CD4-positive, alpha-beta memory T cell (primary cell): ENCODE measurements at regions of chr15 and their contacts with region 1.

Region 1: GRCh38 chr15:41972253-41973242 is at the start of gene EHD4:
- DNase-seq: peak; percentile 94 to 97 (median 95)
- H3K4me3 ChIP-seq: peak within 1 kb of the TSS; percentile 76 to 79
- H3K4me3 Mint-ChIP-seq: peak within 1 kb of the TSS; percentile 92 to 97 (median 94)
- H3K27ac ChIP-seq: peak within 1 kb of the TSS; percentile 87
- H3K27ac Mint-ChIP-seq: peak within 1 kb of the TSS; percentile 85 to 98 (median 97)
- H3K4me1 ChIP-seq: peaks cover 49% of the 10 kb centered on the region
- H3K4me1 Mint-ChIP-seq: peaks cover 31 to 53% (median 40%) of the 10 kb centered on the region in 4 donors
- H3K27me3 ChIP-seq: no peaks in the 10 kb centered on the region
- H3K27me3 Mint-ChIP-seq: peaks cover 5% of the 10 kb centered on the region in 2 donors
- total RNA-seq, gene EHD4: 15.2 to 15.6 TPM

Region 2: GRCh38 chr15:41416742-41417406 is 555.7 kb before region 1 on chr15 and contains the start of gene RTF1:
- CTCF ChIA-PET with region 1: no interaction called
- POLR2A ChIA-PET with region 1: no interaction called
- intact Hi-C with region 1: loop called (anchors 2 kb)
- DNase-seq: peak; percentile 93 to 98 (median 96)
- H3K4me3 ChIP-seq: peak within 1 kb of the TSS; percentile 91 to 100
- H3K4me3 Mint-ChIP-seq: peak within 1 kb of the TSS; percentile 91 to 96 (median 96)
- H3K27ac ChIP-seq: peak within 1 kb of the TSS; percentile 72
- H3K27ac Mint-ChIP-seq: peak within 1 kb of the TSS; percentile 86 to 98 (median 96)
- H3K4me1 ChIP-seq: peaks cover 34% of the 10 kb centered on the region
- H3K4me1 Mint-ChIP-seq: peaks cover 24 to 55% (median 38%) of the 10 kb centered on the region in 4 donors
- H3K27me3 ChIP-seq: no peaks in the 10 kb centered on the region
- H3K27me3 Mint-ChIP-seq: no peaks in the 10 kb centered on the region
- total RNA-seq, gene RTF1: 31.9 to 35.9 TPM

Region 3: GRCh38 chr15:41870689-41871081 is 101.9 kb before region 1 on chr15:
- CTCF ChIA-PET with region 1: no interaction called
- POLR2A ChIA-PET with region 1: no interaction called
- intact Hi-C with region 1: loop called (anchors 1 kb)
- DNase-seq: peak; percentile 67 to 79 (median 71)
- H3K4me3 ChIP-seq: no peak overlapping the region
- H3K4me3 Mint-ChIP-seq: peak overlapping the region in 7 of 8 donors; percentile 12 to 82 (median 64)
- H3K27ac ChIP-seq: no peak overlapping the region
- H3K27ac Mint-ChIP-seq: peak overlapping the region; percentile 13 to 98 (median 96)
- H3K4me1 ChIP-seq: peaks cover 11% of the 10 kb centered on the region
- H3K4me1 Mint-ChIP-seq: peaks cover 8 to 10% (median 9%) of the 10 kb centered on the region in 4 donors
- H3K27me3 ChIP-seq: no peaks in the 10 kb centered on the region
- H3K27me3 Mint-ChIP-seq: no peaks in the 10 kb centered on the region

Region 4: DNA sequence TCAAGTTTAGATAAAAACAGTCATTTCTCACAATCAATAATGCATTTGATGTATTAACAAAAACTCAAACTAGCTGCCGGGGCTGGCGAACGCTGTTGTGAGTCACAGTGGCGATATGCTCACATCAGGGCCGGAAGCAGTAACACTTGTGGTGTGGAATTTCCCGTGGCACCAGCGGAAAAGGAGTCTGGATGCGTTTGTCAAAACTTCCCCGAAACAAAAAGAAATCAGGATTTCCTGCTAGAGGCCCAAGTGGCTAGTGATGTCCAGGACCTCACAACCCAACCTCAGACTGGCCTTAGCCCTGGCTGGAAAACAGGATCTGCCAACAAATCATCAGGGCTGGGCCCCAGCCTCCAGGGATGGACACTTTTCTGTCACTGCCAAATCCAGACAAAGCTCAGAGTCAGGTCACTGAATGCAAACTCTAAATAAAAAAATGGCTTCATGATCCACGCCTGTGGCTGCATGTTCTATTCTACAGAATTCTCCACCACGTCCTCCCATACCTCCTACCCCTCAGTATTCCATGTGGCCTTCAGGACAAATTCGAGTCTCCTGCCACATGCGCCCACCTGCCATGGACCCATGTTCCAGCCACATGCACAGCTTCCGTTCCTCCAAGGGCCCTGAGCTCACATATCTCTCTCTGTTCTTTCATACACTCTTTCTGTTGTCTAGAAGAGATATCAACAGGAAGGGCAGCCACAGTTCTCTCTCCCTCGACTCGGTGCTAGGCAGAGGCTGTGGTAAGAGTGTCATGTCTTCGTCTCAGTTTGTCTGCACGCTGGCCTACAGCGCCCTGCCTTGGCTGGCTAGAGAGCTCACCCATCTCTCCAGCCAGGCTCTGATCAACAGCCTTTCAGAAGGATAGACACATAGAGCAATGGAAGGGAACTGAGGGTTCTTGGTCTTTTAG is 35.6 kb before region 1 on chr15:
- CTCF ChIA-PET with region 1: interaction called, 71 read pairs
- POLR2A ChIA-PET with region 1: interaction called, 245 read pairs
- intact Hi-C with region 1: loop called (anchors 1 kb)
- DNase-seq: peak; percentile 80 to 95 (median 81)
- H3K4me3 ChIP-seq: peak overlapping the region in 1 of 2 donors; percentile 12
- H3K4me3 Mint-ChIP-seq: peak overlapping the region; percentile 77 to 95 (median 89)
- H3K27ac ChIP-seq: peak overlapping the region; percentile 97
- H3K27ac Mint-ChIP-seq: peak overlapping the region; percentile 94 to 100 (median 100)
- H3K4me1 ChIP-seq: peaks cover 75% of the 10 kb centered on the region
- H3K4me1 Mint-ChIP-seq: peaks cover 46 to 76% (median 67%) of the 10 kb centered on the region in 4 donors
- H3K27me3 ChIP-seq: no peaks in the 10 kb centered on the region
- H3K27me3 Mint-ChIP-seq: no peaks in the 10 kb centered on the region

Region 5: GRCh38 chr15:42050484-42051255 is 78.1 kb after region 1 on chr15:
- CTCF ChIA-PET with region 1: no interaction called
- POLR2A ChIA-PET with region 1: no interaction called
- intact Hi-C with region 1: no loop called
- DNase-seq: no peak
- H3K4me3 ChIP-seq: no peak overlapping the region
- H3K4me3 Mint-ChIP-seq: no peak overlapping the region
- H3K27ac ChIP-seq: no peak overlapping the region
- H3K27ac Mint-ChIP-seq: no peak overlapping the region
- H3K4me1 ChIP-seq: no peaks in the 10 kb centered on the region
- H3K4me1 Mint-ChIP-seq: no peaks in the 10 kb centered on the region
- H3K27me3 ChIP-seq: no peaks in the 10 kb centered on the region
- H3K27me3 Mint-ChIP-seq: peaks cover 1 to 7% of the 10 kb centered on the region in 2 donors

Region 6: GRCh38 chr15:42065033-42065432 is 92.5 kb after region 1 on chr15:
- CTCF ChIA-PET with region 1: no interaction called
- POLR2A ChIA-PET with region 1: no interaction called
- intact Hi-C with region 1: no loop called
- DNase-seq: no peak
- H3K4me3 ChIP-seq: no peak overlapping the region
- H3K4me3 Mint-ChIP-seq: no peak overlapping the region
- H3K27ac ChIP-seq: no peak overlapping the region
- H3K27ac Mint-ChIP-seq: no peak overlapping the region
- H3K4me1 ChIP-seq: peaks cover 2% of the 10 kb centered on the region
- H3K4me1 Mint-ChIP-seq: peaks cover 0 to 4% (median 3%) of the 10 kb centered on the region in 4 donors
- H3K27me3 ChIP-seq: no peaks in the 10 kb centered on the region
- H3K27me3 Mint-ChIP-seq: peaks cover 6 to 20% of the 10 kb centered on the region in 2 donors

Region 7: GRCh38 chr15:42273102-42273899 is 300.8 kb after region 1 on chr15 and contains the starts of genes GANC and TMEM87A:
- CTCF ChIA-PET with region 1: interaction called, 3 read pairs
- POLR2A ChIA-PET with region 1: interaction called, 9 read pairs
- intact Hi-C with region 1: loop called (anchors 5 kb)
- DNase-seq: peak; percentile 94 to 98 (median 95)
- H3K4me3 ChIP-seq: peak within 1 kb of the TSS; percentile 73 to 98
- H3K4me3 Mint-ChIP-seq: peak within 1 kb of the TSS; percentile 92 to 100 (median 99)
- H3K27ac ChIP-seq: peak within 1 kb of the TSS; percentile 87
- H3K27ac Mint-ChIP-seq: peak within 1 kb of the TSS; percentile 95 to 100 (median 99)
- H3K4me1 ChIP-seq: peaks cover 52% of the 10 kb centered on the region
- H3K4me1 Mint-ChIP-seq: peaks cover 38 to 69% (median 53%) of the 10 kb centered on the region in 4 donors
- H3K27me3 ChIP-seq: no peaks in the 10 kb centered on the region
- H3K27me3 Mint-ChIP-seq: peaks cover 0 to 2% of the 10 kb centered on the region in 2 donors
- total RNA-seq, gene GANC: 61.7 to 63.4 TPM
- total RNA-seq, gene TMEM87A: 49.9 to 56.6 TPM